Heart left ventricle (tissue), 16 donors: ENCODE measurements at regions of chr3 and their contacts with region 1.

Region 1: GRCh38 chr3:72458358-72458757 is 389.9 kb downstream of the SHQ1 start:
- DNase-seq: no peak
- ATAC-seq: no peak
- H3K4me3 ChIP-seq: no peak overlapping the region
- H3K27ac ChIP-seq: no peak overlapping the region
- H3K4me1 ChIP-seq: peaks cover 0 to 16% (median 9%) of the 10 kb centered on the region in 12 donors
- H3K27me3 ChIP-seq: peaks cover 0 to 4% (median 0%) of the 10 kb centered on the region in 9 donors
- CTCF ChIP-seq: no peak
- POLR2A ChIP-seq: no peak

Region 2: DNA sequence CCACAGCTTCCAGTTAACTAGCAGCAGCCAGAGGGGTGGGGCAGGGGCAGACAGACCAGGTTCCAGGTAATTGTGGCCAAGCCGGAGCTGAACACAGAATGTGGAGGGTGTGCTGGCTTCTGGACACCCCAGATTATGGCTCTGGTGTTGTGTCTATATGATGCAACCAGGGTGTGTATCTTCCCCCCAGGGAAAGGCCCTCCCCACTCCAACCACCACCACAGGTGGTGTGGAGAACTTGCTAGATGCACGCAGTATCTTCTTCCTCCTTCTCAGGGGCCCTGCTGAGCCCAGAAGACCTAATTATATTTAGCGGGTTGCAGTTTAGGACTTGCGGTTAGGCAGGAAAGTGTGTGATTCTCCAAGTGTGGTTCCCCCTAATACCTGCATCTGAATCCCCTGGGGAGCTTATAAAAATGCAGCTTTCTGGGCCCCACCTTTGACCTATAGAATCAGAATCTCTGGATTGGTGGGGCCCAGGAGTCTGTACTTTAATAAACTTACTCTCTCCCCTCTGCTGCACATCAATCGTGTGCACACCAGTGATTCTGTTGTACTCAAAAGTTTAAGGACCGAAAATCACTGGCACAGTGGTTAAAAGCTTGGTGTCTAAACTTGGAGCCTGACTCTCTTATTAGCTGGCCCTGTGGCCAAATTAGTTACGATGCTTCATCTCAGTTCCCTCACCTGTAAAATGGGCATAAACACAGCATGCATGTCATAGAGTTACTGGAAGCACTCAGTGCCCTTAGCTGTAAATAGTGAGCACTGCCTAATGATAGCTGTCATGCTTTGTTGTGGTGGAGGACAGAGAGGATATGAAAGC is 294.3 kb before region 1 on chr3:
- intact Hi-C with region 1: loop called in 1 of 10 experiments (anchors 5 kb)
- DNase-seq: no peak
- ATAC-seq: no peak
- H3K4me3 ChIP-seq: no peak overlapping the region
- H3K27ac ChIP-seq: no peak overlapping the region
- H3K4me1 ChIP-seq: peaks cover 0 to 5% (median 0%) of the 10 kb centered on the region in 12 donors
- H3K27me3 ChIP-seq: no peaks in the 10 kb centered on the region
- CTCF ChIP-seq: no peak
- POLR2A ChIP-seq: no peak

Region 3: DNA sequence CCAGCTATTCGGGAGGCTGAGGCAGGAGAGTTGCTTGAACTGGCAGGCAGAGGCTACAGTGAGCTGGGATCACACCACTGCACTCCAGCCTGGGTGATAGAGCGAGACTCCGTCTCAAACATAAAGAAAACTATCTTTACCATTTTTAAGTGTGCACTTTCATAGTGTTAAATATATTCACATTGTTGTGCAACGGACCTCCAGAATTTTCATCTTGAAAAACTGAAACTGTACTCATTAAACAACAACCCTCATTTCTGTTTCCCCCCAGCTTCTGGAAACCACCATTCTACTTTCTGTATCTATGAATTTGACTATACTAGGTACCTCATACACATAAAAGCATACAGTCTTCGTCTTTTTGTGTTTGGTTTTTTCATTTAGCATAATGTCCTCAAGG is 14.8 kb after region 1 on chr3:
- intact Hi-C with region 1: no loop called
- DNase-seq: no peak
- ATAC-seq: no peak
- H3K4me3 ChIP-seq: no peak overlapping the region
- H3K27ac ChIP-seq: no peak overlapping the region
- H3K4me1 ChIP-seq: peaks cover 0 to 4% (median 0%) of the 10 kb centered on the region in 12 donors
- H3K27me3 ChIP-seq: no peaks in the 10 kb centered on the region
- CTCF ChIP-seq: no peak
- POLR2A ChIP-seq: no peak

Region 4: DNA sequence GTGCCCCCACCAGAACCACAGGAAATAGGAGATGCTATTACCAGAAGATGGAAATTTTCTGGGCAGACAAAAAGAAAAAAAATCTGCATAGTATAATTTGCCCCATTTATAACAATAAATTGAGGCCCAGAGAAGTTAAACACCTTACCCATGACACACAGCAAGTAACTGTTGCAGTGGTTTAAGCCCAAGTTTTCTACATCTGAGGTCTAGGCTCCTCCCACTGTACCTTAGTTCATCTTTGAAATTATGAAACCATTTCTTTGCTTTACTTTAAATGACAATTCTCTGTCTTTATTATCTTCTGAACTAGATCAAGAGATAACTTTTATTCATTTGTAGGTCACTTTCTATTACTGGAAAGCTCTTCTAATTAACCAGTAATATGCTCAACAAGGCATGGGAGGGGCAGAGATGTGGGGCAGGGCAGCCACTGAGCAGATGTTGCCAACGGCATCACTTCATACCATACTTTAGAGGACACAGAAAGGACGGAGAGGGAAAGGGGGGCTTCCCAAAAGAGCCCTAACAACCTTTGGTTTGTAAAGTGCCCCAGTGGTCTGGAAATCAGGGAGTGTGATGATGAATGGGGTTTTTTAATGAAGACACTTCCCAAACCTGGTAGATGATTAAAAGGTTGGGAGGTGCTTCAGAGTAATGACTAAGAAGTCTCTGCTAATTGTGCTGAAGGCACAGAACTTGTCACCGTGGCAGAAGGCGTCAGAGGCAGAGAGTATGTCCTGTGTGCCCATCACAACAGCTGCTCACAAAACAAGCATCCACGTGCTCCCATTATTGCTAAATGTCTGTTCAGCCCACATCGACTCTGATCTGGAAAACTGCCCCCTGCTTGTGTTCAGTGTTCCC is 47.4 kb after region 1 on chr3:
- intact Hi-C with region 1: no loop called
- DNase-seq: no peak
- ATAC-seq: no peak
- H3K4me3 ChIP-seq: no peak overlapping the region
- H3K27ac ChIP-seq: no peak overlapping the region
- H3K4me1 ChIP-seq: no peaks in the 10 kb centered on the region
- H3K27me3 ChIP-seq: no peaks in the 10 kb centered on the region
- CTCF ChIP-seq: no peak
- POLR2A ChIP-seq: no peak